Activated CD4-positive, alpha-beta memory T cell treated with anti-CD3 and anti-CD28 coated beads for 36 hours (primary cell): ENCODE measurements at regions of chr18 and their contacts with region 1.

Region 1: DNA sequence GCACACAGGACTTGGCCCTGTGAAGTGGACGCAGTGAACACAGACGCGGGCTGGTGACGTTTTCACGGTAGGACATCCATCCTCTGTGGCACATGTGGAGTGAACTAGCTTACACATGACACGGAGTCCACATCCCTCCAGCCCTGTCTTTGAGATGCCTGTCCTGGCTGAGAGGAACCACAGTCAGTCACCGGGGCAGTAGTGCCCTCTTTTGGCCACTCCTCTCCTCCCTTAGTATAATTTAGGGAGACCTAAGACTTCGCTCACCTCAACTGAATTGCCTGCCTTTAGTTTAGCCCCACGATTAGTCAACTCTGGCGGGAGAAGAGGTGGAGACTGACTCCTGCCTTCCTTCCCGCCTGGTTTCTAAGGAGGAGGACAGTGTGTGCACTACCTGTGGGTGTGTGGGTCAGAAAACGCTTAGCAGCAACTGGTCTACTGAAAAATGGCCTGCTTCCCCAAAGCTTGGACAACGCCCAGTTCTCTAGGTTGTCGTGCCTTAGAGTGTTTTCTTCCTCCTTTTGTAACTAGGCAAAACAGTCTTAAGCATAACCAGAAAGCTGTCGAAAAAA is 70.6 kb downstream of the MBP start:
- DNase-seq: peak; percentile 62
- H3K4me3 Mint-ChIP-seq: peak overlapping the region; percentile 58
- H3K27ac Mint-ChIP-seq: peak overlapping the region; percentile 100
- H3K4me1 Mint-ChIP-seq: peaks cover 85% of the 10 kb centered on the region
- H3K27me3 Mint-ChIP-seq: no peaks in the 10 kb centered on the region

Region 2: DNA sequence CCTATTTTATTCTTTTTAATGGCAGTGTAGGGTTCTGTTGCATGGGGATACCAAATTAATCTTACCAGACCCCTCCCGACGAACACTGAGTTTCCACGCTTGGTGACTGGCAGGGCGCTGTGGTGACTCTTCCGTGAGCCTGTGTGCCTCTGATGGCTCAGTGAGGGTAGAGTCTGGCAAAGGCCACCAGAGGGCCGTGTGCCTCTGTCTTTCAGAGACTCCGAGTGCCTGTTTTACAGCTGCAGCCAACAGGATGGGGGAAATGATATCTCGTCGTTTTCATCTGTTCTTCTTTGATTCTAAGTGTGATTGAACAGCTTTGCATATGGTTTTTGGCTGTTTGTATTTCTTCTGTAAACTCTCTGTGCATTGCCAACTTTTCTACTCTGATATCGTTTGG is 139.9 kb before region 1 on chr18:
- CTCF ChIA-PET with region 1: no interaction called
- POLR2A ChIA-PET with region 1: no interaction called
- intact Hi-C with region 1: loop called (anchors 2 kb)
- DNase-seq: peak; percentile 60
- H3K4me3 Mint-ChIP-seq: no peak overlapping the region
- H3K27ac Mint-ChIP-seq: no peak overlapping the region
- H3K4me1 Mint-ChIP-seq: peaks cover 12% of the 10 kb centered on the region
- H3K27me3 Mint-ChIP-seq: no peaks in the 10 kb centered on the region

Region 3: DNA sequence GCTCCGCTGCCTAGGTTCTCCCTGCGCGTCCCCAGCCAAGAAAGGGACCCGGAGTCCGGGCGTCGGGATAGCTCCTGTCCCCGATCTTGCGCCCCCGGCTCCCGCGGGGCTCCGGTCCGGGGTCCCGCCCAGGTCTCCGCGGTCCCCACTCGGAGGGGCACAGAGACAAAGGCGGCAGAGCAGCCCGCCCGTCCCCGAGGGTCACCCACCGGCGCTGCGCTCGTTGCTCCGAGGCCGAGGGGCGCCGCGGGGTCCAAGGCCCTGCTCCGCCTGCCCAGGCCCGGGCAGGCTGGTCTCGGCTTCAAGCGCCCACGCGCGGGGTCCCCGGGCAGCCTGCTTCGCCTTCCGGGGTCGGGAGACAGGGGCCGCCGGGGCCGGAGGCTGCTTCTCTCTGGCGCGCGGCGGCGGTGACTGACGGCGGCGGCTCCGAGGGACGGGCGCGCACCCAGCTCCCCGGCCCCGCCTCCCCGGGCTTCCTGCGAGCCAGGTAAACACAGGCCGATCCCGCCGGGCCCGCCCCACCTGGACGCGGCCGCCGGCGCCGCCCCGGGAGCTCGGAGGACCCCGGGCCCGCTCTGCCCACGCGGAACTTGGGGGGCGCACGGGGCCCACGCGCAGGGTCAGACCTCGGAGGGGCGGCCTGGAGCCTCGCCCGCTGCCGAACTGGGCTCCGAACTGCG is 70.5 kb after region 1 on chr18 and contains the start of gene MBP:
- CTCF ChIA-PET with region 1: interaction called, 4 read pairs
- POLR2A ChIA-PET with region 1: interaction called, 7 read pairs
- intact Hi-C with region 1: loop called (anchors 1 kb)
- DNase-seq: peak; percentile 79
- H3K4me3 Mint-ChIP-seq: peak within 1 kb of the TSS; percentile 96
- H3K27ac Mint-ChIP-seq: peak within 1 kb of the TSS; percentile 93
- H3K4me1 Mint-ChIP-seq: peaks cover 44% of the 10 kb centered on the region
- H3K27me3 Mint-ChIP-seq: no peaks in the 10 kb centered on the region
- total RNA-seq, gene MBP: 38.9 to 40.4 TPM

Region 4: DNA sequence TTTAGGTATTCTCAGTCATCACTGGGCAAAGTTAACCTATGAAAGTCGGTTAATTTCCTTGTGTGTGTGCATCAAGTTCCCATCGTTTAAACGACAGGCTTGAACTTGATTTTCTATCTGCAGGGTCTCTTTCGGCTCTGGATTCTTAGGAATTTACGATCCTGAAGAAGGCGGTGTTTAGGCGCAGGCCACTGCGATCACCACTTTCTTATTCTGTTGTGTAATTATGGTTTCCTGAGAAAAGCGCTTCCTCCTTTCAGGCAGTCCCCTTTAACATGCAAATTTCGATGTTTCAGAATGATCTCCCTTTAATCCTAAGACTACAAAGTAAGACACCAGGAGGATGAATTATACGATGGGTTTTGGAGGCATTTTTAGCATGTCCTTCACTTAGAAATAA is 98.5 kb after region 1 on chr18:
- CTCF ChIA-PET with region 1: no interaction called
- POLR2A ChIA-PET with region 1: no interaction called
- intact Hi-C with region 1: no loop called
- DNase-seq: no peak
- H3K4me3 Mint-ChIP-seq: no peak overlapping the region
- H3K27ac Mint-ChIP-seq: no peak overlapping the region
- H3K4me1 Mint-ChIP-seq: no peaks in the 10 kb centered on the region
- H3K27me3 Mint-ChIP-seq: no peaks in the 10 kb centered on the region